Activated CD8-positive, alpha-beta T cell treated with anti-CD3 and anti-CD28 coated beads for 36 hours (primary cell): ENCODE measurements at regions of chr3 and their contacts with region 1.

Region 1: GRCh38 chr3:152205097-152205593 is 63.6 kb upstream of the MBNL1 start:
- DNase-seq: no peak
- ATAC-seq: peak; percentile 6
- H3K4me3 Mint-ChIP-seq: peak overlapping the region; percentile 78
- H3K27ac Mint-ChIP-seq: peak overlapping the region; percentile 90
- H3K4me1 Mint-ChIP-seq: peaks cover 59% of the 10 kb centered on the region
- H3K27me3 Mint-ChIP-seq: no peaks in the 10 kb centered on the region
- CTCF ChIP-seq: no peak

Region 2: GRCh38 chr3:151203051-151203420 is 1002.1 kb before region 1 on chr3 and contains the start of gene GPR171:
- CTCF ChIA-PET with region 1: no interaction called
- POLR2A ChIA-PET with region 1: no interaction called
- intact Hi-C with region 1: loop called (anchors 5 kb)
- DNase-seq: peak; percentile 82
- ATAC-seq: peak; percentile 64
- H3K4me3 Mint-ChIP-seq: peak within 1 kb of the TSS; percentile 87
- H3K27ac Mint-ChIP-seq: peak within 1 kb of the TSS; percentile 96
- H3K4me1 Mint-ChIP-seq: peaks cover 54% of the 10 kb centered on the region
- H3K27me3 Mint-ChIP-seq: no peaks in the 10 kb centered on the region
- CTCF ChIP-seq: no peak
- total RNA-seq, gene GPR171: 91.8 to 101 TPM

Region 3: GRCh38 chr3:152026033-152026556 is 179.1 kb before region 1 on chr3:
- CTCF ChIA-PET with region 1: no interaction called
- POLR2A ChIA-PET with region 1: no interaction called
- intact Hi-C with region 1: no loop called
- DNase-seq: no peak
- ATAC-seq: no peak
- H3K4me3 Mint-ChIP-seq: no peak overlapping the region
- H3K27ac Mint-ChIP-seq: no peak overlapping the region
- H3K4me1 Mint-ChIP-seq: peaks cover 8% of the 10 kb centered on the region
- H3K27me3 Mint-ChIP-seq: peaks cover 2% of the 10 kb centered on the region
- CTCF ChIP-seq: no peak

Region 4: GRCh38 chr3:152183473-152183872 is 21.7 kb before region 1 on chr3:
- CTCF ChIA-PET with region 1: interaction called, 14 read pairs
- POLR2A ChIA-PET with region 1: interaction called, 3 read pairs
- intact Hi-C with region 1: no loop called
- DNase-seq: peak; percentile 82
- ATAC-seq: peak; percentile 91
- H3K4me3 Mint-ChIP-seq: peak overlapping the region; percentile 32
- H3K27ac Mint-ChIP-seq: peak overlapping the region; percentile 72
- H3K4me1 Mint-ChIP-seq: peaks cover 57% of the 10 kb centered on the region
- H3K27me3 Mint-ChIP-seq: no peaks in the 10 kb centered on the region
- CTCF ChIP-seq: peak; percentile 71

Region 5: GRCh38 chr3:152219216-152219615 is 14.1 kb after region 1 on chr3:
- CTCF ChIA-PET with region 1: interaction called, 11 read pairs
- POLR2A ChIA-PET with region 1: interaction called, 13 read pairs
- intact Hi-C with region 1: no loop called
- DNase-seq: no peak
- ATAC-seq: no peak
- H3K4me3 Mint-ChIP-seq: peak overlapping the region; percentile 74
- H3K27ac Mint-ChIP-seq: peak overlapping the region; percentile 28
- H3K4me1 Mint-ChIP-seq: peaks cover 58% of the 10 kb centered on the region
- H3K27me3 Mint-ChIP-seq: no peaks in the 10 kb centered on the region
- CTCF ChIP-seq: no peak

Region 6: DNA sequence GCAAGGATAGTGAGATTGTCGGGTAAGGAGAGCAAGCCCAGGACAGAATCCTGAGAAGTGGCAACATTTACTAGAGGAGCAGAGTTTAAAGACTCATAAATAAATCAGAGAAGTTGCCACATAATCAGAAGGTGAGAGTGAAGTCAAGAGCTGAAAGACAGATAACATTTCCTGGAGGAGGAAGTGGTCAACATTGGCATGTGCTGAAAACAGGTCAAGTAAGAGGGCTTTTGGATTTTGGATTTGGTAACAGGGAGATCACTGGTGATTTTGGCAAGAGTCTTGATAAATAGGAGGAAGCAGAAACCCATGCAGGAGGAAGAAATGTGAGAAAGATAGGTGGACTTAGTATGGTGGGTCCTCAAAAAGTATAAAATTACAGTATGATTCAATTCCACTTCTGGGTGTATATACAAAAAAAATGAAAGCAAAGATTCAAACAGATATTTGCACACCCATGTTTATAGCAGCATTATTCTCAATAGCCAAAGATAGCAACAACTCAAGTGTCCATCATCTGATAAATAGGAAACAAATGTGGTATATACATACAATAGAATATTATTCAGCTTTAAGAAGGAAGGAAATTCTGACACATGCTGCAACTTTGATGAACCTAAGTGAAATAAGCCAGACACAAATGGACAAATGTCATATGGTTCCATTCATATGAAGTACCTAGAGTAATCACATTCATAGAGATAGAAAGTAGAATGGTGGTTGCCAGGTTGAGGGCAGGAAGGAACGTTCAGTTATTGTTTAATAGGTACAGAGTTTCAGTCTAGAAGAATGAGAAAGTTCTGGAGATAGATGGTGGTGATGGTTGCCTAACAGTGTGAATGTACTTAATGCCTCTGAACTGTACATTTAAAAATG is 36.2 kb after region 1 on chr3:
- CTCF ChIA-PET with region 1: interaction called, 9 read pairs
- POLR2A ChIA-PET with region 1: interaction called, 89 read pairs
- intact Hi-C with region 1: loop called (anchors 5 kb)
- DNase-seq: peak; percentile 54
- ATAC-seq: peak; percentile 62
- H3K4me3 Mint-ChIP-seq: peak overlapping the region; percentile 47
- H3K27ac Mint-ChIP-seq: peak overlapping the region; percentile 93
- H3K4me1 Mint-ChIP-seq: peaks cover 58% of the 10 kb centered on the region
- H3K27me3 Mint-ChIP-seq: no peaks in the 10 kb centered on the region
- CTCF ChIP-seq: no peak